ENCODE measurements at regions of chr7 and their contacts with region 1.

Region 1: DNA sequence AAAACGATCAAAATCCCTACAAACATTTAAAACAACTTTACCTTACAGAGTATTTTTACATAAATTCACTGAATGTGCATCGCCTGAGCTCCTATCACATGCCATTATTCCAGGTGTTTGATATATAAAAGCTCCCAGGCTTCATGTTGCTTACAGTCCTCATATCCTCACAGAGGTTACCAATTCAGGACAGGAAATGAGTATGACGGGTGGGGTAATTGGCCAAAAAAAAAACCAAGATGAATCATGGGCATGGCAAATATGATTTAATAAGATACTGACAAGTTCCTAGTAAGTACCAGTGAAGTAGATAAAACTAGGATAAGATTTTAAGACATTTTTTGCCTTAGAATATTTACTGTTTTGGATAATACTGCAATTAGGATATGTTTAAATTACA is 135.8 kb downstream of the KMT2E start:
- DNase-seq: no peak
- ATAC-seq: no peak
- H3K4me3 ChIP-seq: no peak overlapping the region
- H3K4me3 Mint-ChIP-seq: no peak overlapping the region
- H3K27ac ChIP-seq: no peak overlapping the region
- H3K27ac Mint-ChIP-seq: no peak overlapping the region
- H3K4me1 ChIP-seq: no peaks in the 10 kb centered on the region
- H3K4me1 Mint-ChIP-seq: peaks cover 2% of the 10 kb centered on the region
- H3K27me3 ChIP-seq: no peaks in the 10 kb centered on the region
- H3K27me3 Mint-ChIP-seq: no peaks in the 10 kb centered on the region
- CTCF ChIP-seq: no peak

Region 2: GRCh38 chr7:104351012-104351411 is 798.8 kb before region 1 on chr7:
- CTCF ChIA-PET with region 1: no interaction called
- POLR2A ChIA-PET with region 1: no interaction called
- intact Hi-C with region 1: no loop called
- DNase-seq: no peak
- ATAC-seq: no peak
- H3K4me3 ChIP-seq: no peak overlapping the region
- H3K4me3 Mint-ChIP-seq: no peak overlapping the region
- H3K27ac ChIP-seq: no peak overlapping the region
- H3K27ac Mint-ChIP-seq: no peak overlapping the region
- H3K4me1 ChIP-seq: no peaks in the 10 kb centered on the region
- H3K4me1 Mint-ChIP-seq: no peaks in the 10 kb centered on the region
- H3K27me3 ChIP-seq: no peaks in the 10 kb centered on the region
- H3K27me3 Mint-ChIP-seq: peaks cover 2% of the 10 kb centered on the region
- CTCF ChIP-seq: no peak

Region 3: GRCh38 chr7:105131033-105131656 is 18.7 kb before region 1 on chr7:
- CTCF ChIA-PET with region 1: no interaction called
- POLR2A ChIA-PET with region 1: no interaction called
- intact Hi-C with region 1: no loop called
- DNase-seq: no peak
- ATAC-seq: no peak
- H3K4me3 ChIP-seq: no peak overlapping the region
- H3K4me3 Mint-ChIP-seq: no peak overlapping the region
- H3K27ac ChIP-seq: no peak overlapping the region
- H3K27ac Mint-ChIP-seq: peak overlapping the region; percentile 47
- H3K4me1 ChIP-seq: no peaks in the 10 kb centered on the region
- H3K4me1 Mint-ChIP-seq: peaks cover 15% of the 10 kb centered on the region
- H3K27me3 ChIP-seq: no peaks in the 10 kb centered on the region
- H3K27me3 Mint-ChIP-seq: no peaks in the 10 kb centered on the region
- CTCF ChIP-seq: no peak

Region 4: DNA sequence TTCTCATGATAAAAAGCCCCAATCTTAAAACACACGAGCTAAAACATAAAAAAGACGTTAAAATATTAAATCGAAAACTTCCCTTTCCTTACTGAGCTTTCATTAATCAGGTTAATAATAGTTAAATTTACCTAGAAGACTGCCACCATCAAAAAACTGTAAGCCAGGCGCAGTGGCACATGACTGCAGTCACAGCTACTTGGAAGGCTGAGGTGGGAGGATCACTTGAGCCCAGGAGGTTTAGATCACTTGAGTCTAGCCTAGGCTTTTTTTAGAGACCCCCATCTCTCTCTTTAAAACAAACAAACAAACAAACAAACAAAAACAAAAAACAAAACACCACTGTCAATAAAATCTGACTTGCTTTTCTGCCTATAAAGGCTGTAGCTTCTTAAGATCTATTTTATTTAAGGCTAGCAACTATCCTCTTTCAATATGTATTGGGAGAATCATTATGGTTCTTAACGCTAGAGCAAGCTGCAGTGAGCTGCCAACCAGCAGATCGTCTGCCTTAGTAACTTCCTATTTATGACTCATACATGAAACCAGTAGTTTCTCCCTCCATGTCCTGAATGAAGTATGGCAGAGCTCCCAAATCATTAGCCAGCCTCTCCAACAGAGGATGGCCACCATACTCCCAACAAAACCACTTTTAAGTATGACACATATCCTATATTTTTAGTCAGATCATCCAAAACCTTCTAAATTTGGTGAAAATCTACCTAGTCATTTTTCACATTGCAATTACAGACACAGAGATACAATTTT is 75.2 kb after region 1 on chr7:
- CTCF ChIA-PET with region 1: no interaction called
- POLR2A ChIA-PET with region 1: no interaction called
- intact Hi-C with region 1: no loop called
- DNase-seq: peak in 2 of 9 experiments; percentile 15 to 32
- ATAC-seq: peak; percentile 46
- H3K4me3 ChIP-seq: no peak overlapping the region
- H3K4me3 Mint-ChIP-seq: no peak overlapping the region
- H3K27ac ChIP-seq: no peak overlapping the region
- H3K27ac Mint-ChIP-seq: no peak overlapping the region
- H3K4me1 ChIP-seq: peaks cover 8% of the 10 kb centered on the region
- H3K4me1 Mint-ChIP-seq: peaks cover 34% of the 10 kb centered on the region
- H3K27me3 ChIP-seq: no peaks in the 10 kb centered on the region
- H3K27me3 Mint-ChIP-seq: no peaks in the 10 kb centered on the region
- CTCF ChIP-seq: no peak

Region 5: GRCh38 chr7:105487579-105488571 is 338.0 kb after region 1 on chr7:
- CTCF ChIA-PET with region 1: interaction called, 3 read pairs
- POLR2A ChIA-PET with region 1: no interaction called
- intact Hi-C with region 1: loop called in 1 of 2 experiments (anchors 5 kb)
- DNase-seq: peak in 3 of 9 experiments; percentile 39 to 53 (median 50)
- ATAC-seq: no peak
- H3K4me3 ChIP-seq: no peak overlapping the region
- H3K4me3 Mint-ChIP-seq: no peak overlapping the region
- H3K27ac ChIP-seq: no peak overlapping the region
- H3K27ac Mint-ChIP-seq: no peak overlapping the region
- H3K4me1 ChIP-seq: no peaks in the 10 kb centered on the region
- H3K4me1 Mint-ChIP-seq: peaks cover 4% of the 10 kb centered on the region
- H3K27me3 ChIP-seq: no peaks in the 10 kb centered on the region
- H3K27me3 Mint-ChIP-seq: no peaks in the 10 kb centered on the region
- CTCF ChIP-seq: peak; percentile 22

Measured in CD8-positive, alpha-beta T cell (primary cell).